Activated CD4-positive, alpha-beta T cell treated with anti-CD3 and anti-CD28 coated beads, Interleukin-2, amount 10 ng/mL, durations not matched to agents 24 days and 14 days (primary cell): ENCODE measurements at regions of chr5 and their contacts with region 1.

Region 1: GRCh38 chr5:35672995-35673394 is 55.3 kb downstream of the SPEF2 start:
- DNase-seq: peak; percentile 86
- H3K4me3 Mint-ChIP-seq: peak overlapping the region; percentile 51
- H3K27ac Mint-ChIP-seq: peak overlapping the region; percentile 80
- H3K4me1 Mint-ChIP-seq: peaks cover 45% of the 10 kb centered on the region
- H3K27me3 Mint-ChIP-seq: no peaks in the 10 kb centered on the region

Region 2: GRCh38 chr5:35617435-35618303 is 55.3 kb before region 1 on chr5 and contains the start of gene SPEF2:
- intact Hi-C with region 1: loop called (anchors 5 kb)
- DNase-seq: peak; percentile 93
- H3K4me3 Mint-ChIP-seq: peak within 1 kb of the TSS; percentile 87
- H3K27ac Mint-ChIP-seq: peak within 1 kb of the TSS; percentile 89
- H3K4me1 Mint-ChIP-seq: peaks cover 23% of the 10 kb centered on the region
- H3K27me3 Mint-ChIP-seq: no peaks in the 10 kb centered on the region
- total RNA-seq, gene SPEF2: 5.5 and 5.8 TPM in 2 replicates

Region 3: GRCh38 chr5:35651002-35651756 is 21.8 kb before region 1 on chr5:
- intact Hi-C with region 1: loop called (anchors 2 kb)
- DNase-seq: peak; percentile 90
- H3K4me3 Mint-ChIP-seq: no peak overlapping the region
- H3K27ac Mint-ChIP-seq: no peak overlapping the region
- H3K4me1 Mint-ChIP-seq: peaks cover 2% of the 10 kb centered on the region
- H3K27me3 Mint-ChIP-seq: no peaks in the 10 kb centered on the region

Region 4: GRCh38 chr5:35736280-35736679 is 63.3 kb after region 1 on chr5:
- intact Hi-C with region 1: loop called (anchors 5 kb)
- DNase-seq: peak; percentile 54
- H3K4me3 Mint-ChIP-seq: no peak overlapping the region
- H3K27ac Mint-ChIP-seq: peak overlapping the region; percentile 41
- H3K4me1 Mint-ChIP-seq: peaks cover 20% of the 10 kb centered on the region
- H3K27me3 Mint-ChIP-seq: no peaks in the 10 kb centered on the region

Region 5: GRCh38 chr5:35771309-35771708 is 98.3 kb after region 1 on chr5:
- intact Hi-C with region 1: loop called (anchors 5 kb)
- DNase-seq: peak; percentile 40
- H3K4me3 Mint-ChIP-seq: no peak overlapping the region
- H3K27ac Mint-ChIP-seq: no peak overlapping the region
- H3K4me1 Mint-ChIP-seq: peaks cover 20% of the 10 kb centered on the region
- H3K27me3 Mint-ChIP-seq: no peaks in the 10 kb centered on the region

Region 6: DNA sequence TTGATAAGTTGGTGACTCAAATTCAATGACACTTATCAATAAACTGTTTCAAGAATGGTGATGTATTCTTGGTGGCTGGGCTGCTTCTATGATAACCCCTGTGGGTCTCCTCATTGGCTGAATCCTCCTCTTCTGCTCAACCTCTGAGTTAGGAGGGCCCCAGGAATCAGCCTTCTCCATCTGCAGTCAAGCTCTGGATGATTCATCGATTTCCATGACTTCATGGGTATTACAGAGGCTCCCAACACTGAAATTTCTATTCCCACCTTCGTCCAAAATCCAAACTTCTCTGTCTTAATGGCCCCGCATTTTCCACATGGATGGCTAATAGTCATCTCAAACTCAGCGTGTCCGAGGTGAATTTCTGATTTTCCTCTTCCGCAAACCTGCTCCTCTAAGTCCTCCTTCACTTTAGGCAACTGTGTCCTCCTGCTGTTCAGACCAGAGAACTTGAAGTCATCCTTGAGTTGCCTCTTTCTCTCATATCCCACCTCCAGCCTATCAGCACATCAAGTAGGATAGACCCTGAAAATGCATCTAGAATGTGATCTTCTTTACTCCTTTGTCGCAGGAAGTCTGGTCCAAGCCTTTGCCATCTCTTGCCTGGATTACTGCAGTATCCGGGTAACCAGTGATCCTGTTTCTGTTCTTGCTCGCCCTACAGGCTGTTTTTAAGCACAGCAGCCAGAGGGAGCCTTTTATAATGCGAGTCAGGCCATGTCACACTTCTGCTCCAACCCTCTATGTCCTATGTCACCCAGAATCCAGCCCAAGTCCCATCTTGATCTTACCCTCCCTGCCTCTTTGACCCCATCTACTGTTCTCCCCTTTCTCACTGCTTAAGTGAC is 142.3 kb after region 1 on chr5:
- intact Hi-C with region 1: loop called (anchors 5 kb)
- DNase-seq: peak; percentile 83
- H3K4me3 Mint-ChIP-seq: no peak overlapping the region
- H3K27ac Mint-ChIP-seq: no peak overlapping the region
- H3K4me1 Mint-ChIP-seq: peaks cover 34% of the 10 kb centered on the region
- H3K27me3 Mint-ChIP-seq: no peaks in the 10 kb centered on the region

Region 7: DNA sequence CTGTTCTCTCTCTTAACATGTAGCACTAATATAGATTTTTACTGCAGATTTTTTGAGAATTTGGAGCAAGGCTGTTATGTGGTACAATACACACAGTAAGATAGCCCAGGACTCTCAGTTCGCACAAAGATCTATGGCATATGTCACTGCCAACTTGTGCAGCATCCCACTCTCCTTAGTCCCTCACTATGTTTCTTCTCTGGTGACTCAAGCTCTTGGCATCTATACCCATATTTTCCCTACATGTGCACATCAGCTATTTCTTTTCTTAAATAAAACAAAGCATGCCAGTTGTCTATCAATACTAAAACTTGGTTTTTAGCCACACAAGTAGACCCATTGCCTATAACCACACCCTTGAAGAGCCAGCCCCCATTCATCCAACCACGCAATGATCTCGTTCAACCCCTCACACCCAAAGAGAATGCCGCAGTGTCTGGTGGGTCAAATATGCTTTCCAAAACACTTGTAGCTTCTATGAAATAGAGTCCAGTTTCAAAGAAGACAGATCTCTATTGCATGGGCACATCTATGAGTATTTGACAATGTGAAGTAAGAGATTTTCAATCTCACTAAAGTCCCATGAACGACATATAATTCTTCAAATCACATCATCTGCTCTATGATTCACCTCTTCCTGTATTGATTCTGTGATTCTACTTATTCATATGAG is 165.5 kb after region 1 on chr5:
- intact Hi-C with region 1: loop called (anchors 5 kb)
- DNase-seq: peak; percentile 58
- H3K4me3 Mint-ChIP-seq: peak overlapping the region; percentile 39
- H3K27ac Mint-ChIP-seq: peak overlapping the region; percentile 88
- H3K4me1 Mint-ChIP-seq: peaks cover 53% of the 10 kb centered on the region
- H3K27me3 Mint-ChIP-seq: no peaks in the 10 kb centered on the region